CD8-positive, alpha-beta memory T cell (primary cell): ENCODE measurements at regions of chr11 and their contacts with region 1.

Region 1: GRCh38 chr11:64204464-64204989 is 2.0 kb upstream of the FERMT3 start:
- DNase-seq: peak; percentile 75 to 92 (median 79)
- H3K4me3 ChIP-seq: no peak overlapping the region
- H3K4me3 Mint-ChIP-seq: peak overlapping the region; percentile 61 to 98 (median 84)
- H3K27ac ChIP-seq: no peak overlapping the region
- H3K27ac Mint-ChIP-seq: peak overlapping the region; percentile 62 to 99 (median 95)
- H3K4me1 ChIP-seq: peaks cover 39% of the 10 kb centered on the region
- H3K4me1 Mint-ChIP-seq: peaks cover 16 to 55% (median 31%) of the 10 kb centered on the region in 3 donors
- H3K27me3 ChIP-seq: no peaks in the 10 kb centered on the region
- H3K27me3 Mint-ChIP-seq: no peaks in the 10 kb centered on the region

Region 2: DNA sequence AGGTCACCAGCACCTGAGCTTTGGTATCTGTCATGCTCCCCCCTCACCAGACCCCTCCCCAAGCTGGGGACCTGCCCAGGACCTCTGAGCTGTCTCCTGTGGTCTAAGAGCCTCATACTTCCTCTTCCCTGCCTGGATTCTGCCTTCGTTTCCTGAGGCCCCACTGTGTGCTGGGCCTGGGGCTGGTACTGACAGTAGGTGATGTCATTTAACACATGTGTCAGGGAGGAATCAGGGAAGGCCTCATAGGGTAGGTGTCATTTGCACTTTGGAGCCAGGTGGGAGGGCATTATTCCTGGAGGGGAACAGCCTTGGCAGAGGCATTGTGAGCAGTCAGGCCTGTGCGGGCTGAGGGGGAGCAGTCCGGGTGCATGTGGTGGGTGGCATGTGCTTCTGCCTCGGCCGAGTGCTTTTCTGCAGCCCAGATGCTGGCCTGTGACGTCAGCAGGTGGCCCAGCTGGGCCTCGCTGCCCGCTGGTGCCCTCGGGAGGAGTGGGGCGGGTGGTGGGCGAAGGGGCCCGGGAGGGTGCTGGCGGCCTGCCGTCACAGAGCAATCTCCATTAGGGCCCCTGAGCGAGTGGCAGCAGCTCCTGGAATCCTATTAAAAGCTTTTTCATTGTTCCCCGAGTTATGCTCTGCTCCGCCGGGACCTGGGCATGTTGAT is 159.7 kb before region 1 on chr11:
- CTCF ChIA-PET with region 1: no interaction called
- POLR2A ChIA-PET with region 1: no interaction called
- DNase-seq: no peak
- H3K4me3 ChIP-seq: no peak overlapping the region
- H3K4me3 Mint-ChIP-seq: no peak overlapping the region
- H3K27ac ChIP-seq: no peak overlapping the region
- H3K27ac Mint-ChIP-seq: no peak overlapping the region
- H3K4me1 ChIP-seq: no peaks in the 10 kb centered on the region
- H3K4me1 Mint-ChIP-seq: no peaks in the 10 kb centered on the region
- H3K27me3 ChIP-seq: no peaks in the 10 kb centered on the region
- H3K27me3 Mint-ChIP-seq: peaks cover 0 to 13% of the 10 kb centered on the region in 2 donors

Region 3: DNA sequence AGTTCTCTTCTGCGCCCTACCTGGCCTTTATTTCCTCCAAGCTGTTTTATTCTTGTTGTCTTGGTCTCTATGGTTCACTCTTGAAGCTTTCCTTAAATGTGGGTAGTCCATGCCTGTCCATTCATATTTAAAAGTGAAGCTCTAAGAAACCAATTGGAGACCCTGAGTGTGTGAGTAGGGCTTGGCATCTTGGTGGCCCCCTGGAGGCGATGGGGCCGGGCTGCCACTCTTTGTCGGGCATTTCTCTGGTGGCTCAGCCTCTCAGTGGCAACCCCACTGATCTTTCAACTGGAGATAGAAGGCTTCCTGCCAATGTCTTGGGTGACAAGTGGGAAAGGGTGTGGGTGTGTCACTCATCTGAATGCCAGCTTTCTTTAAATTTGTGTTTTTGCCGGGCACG is 12.4 kb after region 1 on chr11:
- CTCF ChIA-PET with region 1: interaction called, 143 read pairs
- POLR2A ChIA-PET with region 1: interaction called, 5 read pairs
- DNase-seq: peak in 1 of 5 donors; percentile 29
- H3K4me3 ChIP-seq: no peak overlapping the region
- H3K4me3 Mint-ChIP-seq: no peak overlapping the region
- H3K27ac ChIP-seq: no peak overlapping the region
- H3K27ac Mint-ChIP-seq: peak overlapping the region in 3 of 8 donors; percentile 24 to 50 (median 50)
- H3K4me1 ChIP-seq: no peaks in the 10 kb centered on the region
- H3K4me1 Mint-ChIP-seq: peaks cover 10 to 18% (median 11%) of the 10 kb centered on the region in 3 donors
- H3K27me3 ChIP-seq: no peaks in the 10 kb centered on the region
- H3K27me3 Mint-ChIP-seq: peaks cover 0 to 1% of the 10 kb centered on the region in 2 donors

Region 4: GRCh38 chr11:64233913-64234834 is 29.6 kb after region 1 on chr11 and contains the start of gene VEGFB:
- CTCF ChIA-PET with region 1: interaction called, 11 read pairs
- POLR2A ChIA-PET with region 1: interaction called, 5 read pairs
- DNase-seq: peak; percentile 65 to 82 (median 70)
- H3K4me3 ChIP-seq: peak within 1 kb of the TSS; percentile 67
- H3K4me3 Mint-ChIP-seq: peak within 1 kb of the TSS; percentile 78 to 97 (median 83)
- H3K27ac ChIP-seq: peak within 1 kb of the TSS; percentile 49
- H3K27ac Mint-ChIP-seq: peak within 1 kb of the TSS; percentile 75 to 96 (median 89)
- H3K4me1 ChIP-seq: peaks cover 43% of the 10 kb centered on the region
- H3K4me1 Mint-ChIP-seq: peaks cover 26 to 61% (median 40%) of the 10 kb centered on the region in 3 donors
- H3K27me3 ChIP-seq: no peaks in the 10 kb centered on the region
- H3K27me3 Mint-ChIP-seq: peaks cover 0 to 2% of the 10 kb centered on the region in 2 donors
- total RNA-seq, gene VEGFB: 71.9 to 77.0 TPM

Region 5: GRCh38 chr11:64246871-64247728 is 42.6 kb after region 1 on chr11 and contains the start of gene PPP1R14B:
- CTCF ChIA-PET with region 1: interaction called, 64 read pairs
- POLR2A ChIA-PET with region 1: interaction called, 24 read pairs
- DNase-seq: peak; percentile 66 to 86 (median 73)
- H3K4me3 ChIP-seq: peak within 1 kb of the TSS; percentile 100
- H3K4me3 Mint-ChIP-seq: peak within 1 kb of the TSS; percentile 83 to 96 (median 86)
- H3K27ac ChIP-seq: peak within 1 kb of the TSS; percentile 67
- H3K27ac Mint-ChIP-seq: peak within 1 kb of the TSS; percentile 79 to 96 (median 88)
- H3K4me1 ChIP-seq: peaks cover 42% of the 10 kb centered on the region
- H3K4me1 Mint-ChIP-seq: peaks cover 25 to 62% (median 29%) of the 10 kb centered on the region in 3 donors
- H3K27me3 ChIP-seq: no peaks in the 10 kb centered on the region
- H3K27me3 Mint-ChIP-seq: no peaks in the 10 kb centered on the region
- total RNA-seq, gene PPP1R14B: 365 to 381 TPM

Region 6: GRCh38 chr11:64298966-64299846 is 94.7 kb after region 1 on chr11:
- CTCF ChIA-PET with region 1: interaction called, 281 read pairs
- POLR2A ChIA-PET with region 1: interaction called, 19 read pairs
- DNase-seq: peak in 1 of 5 donors; percentile 19
- H3K4me3 ChIP-seq: no peak overlapping the region
- H3K4me3 Mint-ChIP-seq: peak overlapping the region; percentile 11 to 86 (median 77)
- H3K27ac ChIP-seq: no peak overlapping the region
- H3K27ac Mint-ChIP-seq: peak overlapping the region in 6 of 8 donors; percentile 34 to 78 (median 38)
- H3K4me1 ChIP-seq: peaks cover 22% of the 10 kb centered on the region
- H3K4me1 Mint-ChIP-seq: peaks cover 18 to 36% (median 20%) of the 10 kb centered on the region in 3 donors
- H3K27me3 ChIP-seq: peaks cover 64% of the 10 kb centered on the region
- H3K27me3 Mint-ChIP-seq: peaks cover 58 to 66% of the 10 kb centered on the region in 2 donors

Region 7: GRCh38 chr11:64317957-64318693 is 113.6 kb after region 1 on chr11 and contains the start of gene PRDX5:
- CTCF ChIA-PET with region 1: interaction called, 18 read pairs
- POLR2A ChIA-PET with region 1: interaction called, 8 read pairs
- DNase-seq: peak; percentile 92 to 98 (median 97)
- H3K4me3 ChIP-seq: peak within 1 kb of the TSS; percentile 93
- H3K4me3 Mint-ChIP-seq: peak within 1 kb of the TSS; percentile 89 to 97 (median 94)
- H3K27ac ChIP-seq: peak within 1 kb of the TSS; percentile 97
- H3K27ac Mint-ChIP-seq: peak within 1 kb of the TSS; percentile 98 to 100 (median 99)
- H3K4me1 ChIP-seq: peaks cover 14% of the 10 kb centered on the region
- H3K4me1 Mint-ChIP-seq: peaks cover 29 to 43% (median 31%) of the 10 kb centered on the region in 3 donors
- H3K27me3 ChIP-seq: no peaks in the 10 kb centered on the region
- H3K27me3 Mint-ChIP-seq: peaks cover 0 to 7% of the 10 kb centered on the region in 2 donors
- total RNA-seq, gene PRDX5: 114 to 126 TPM

Region 8: GRCh38 chr11:64341851-64342791 is 137.6 kb after region 1 on chr11:
- CTCF ChIA-PET with region 1: interaction called, 10 read pairs
- POLR2A ChIA-PET with region 1: interaction called, 3 read pairs
- DNase-seq: peak; percentile 81 to 87 (median 85)
- H3K4me3 ChIP-seq: peak overlapping the region; percentile 15
- H3K4me3 Mint-ChIP-seq: peak overlapping the region in 6 of 7 donors; percentile 27 to 87 (median 58)
- H3K27ac ChIP-seq: peak overlapping the region; percentile 54
- H3K27ac Mint-ChIP-seq: peak overlapping the region in 5 of 8 donors; percentile 23 to 79 (median 74)
- H3K4me1 ChIP-seq: peaks cover 32% of the 10 kb centered on the region
- H3K4me1 Mint-ChIP-seq: peaks cover 34 to 59% (median 37%) of the 10 kb centered on the region in 3 donors
- H3K27me3 ChIP-seq: no peaks in the 10 kb centered on the region
- H3K27me3 Mint-ChIP-seq: peaks cover 0 to 2% of the 10 kb centered on the region in 2 donors

Region 9: GRCh38 chr11:64538501-64539294 is 334.2 kb after region 1 on chr11:
- CTCF ChIA-PET with region 1: no interaction called
- POLR2A ChIA-PET with region 1: no interaction called
- DNase-seq: peak in 1 of 5 donors; percentile 27
- H3K4me3 ChIP-seq: no peak overlapping the region
- H3K4me3 Mint-ChIP-seq: no peak overlapping the region
- H3K27ac ChIP-seq: no peak overlapping the region
- H3K27ac Mint-ChIP-seq: no peak overlapping the region
- H3K4me1 ChIP-seq: no peaks in the 10 kb centered on the region
- H3K4me1 Mint-ChIP-seq: no peaks in the 10 kb centered on the region
- H3K27me3 ChIP-seq: peaks cover 6% of the 10 kb centered on the region
- H3K27me3 Mint-ChIP-seq: peaks cover 27 to 61% of the 10 kb centered on the region in 2 donors